ENCODE measurements at regions of chr14 and their contacts with region 1.

Region 1: GRCh38 chr14:61475316-61475715 is 153.9 kb downstream of the PRKCH start:
- DNase-seq: no peak
- H3K4me3 Mint-ChIP-seq: peak overlapping the region; percentile 38
- H3K27ac Mint-ChIP-seq: peak overlapping the region; percentile 100
- H3K4me1 Mint-ChIP-seq: peaks cover 88% of the 10 kb centered on the region
- H3K27me3 Mint-ChIP-seq: no peaks in the 10 kb centered on the region

Region 2: GRCh38 chr14:61178226-61179060 is 296.9 kb before region 1 on chr14:
- CTCF ChIA-PET with region 1: no interaction called
- intact Hi-C with region 1: loop called (anchors 2 kb)
- DNase-seq: peak; percentile 78
- H3K4me3 Mint-ChIP-seq: peak overlapping the region; percentile 41
- H3K27ac Mint-ChIP-seq: peak overlapping the region; percentile 94
- H3K4me1 Mint-ChIP-seq: peaks cover 57% of the 10 kb centered on the region
- H3K27me3 Mint-ChIP-seq: peaks cover 6% of the 10 kb centered on the region

Region 3: DNA sequence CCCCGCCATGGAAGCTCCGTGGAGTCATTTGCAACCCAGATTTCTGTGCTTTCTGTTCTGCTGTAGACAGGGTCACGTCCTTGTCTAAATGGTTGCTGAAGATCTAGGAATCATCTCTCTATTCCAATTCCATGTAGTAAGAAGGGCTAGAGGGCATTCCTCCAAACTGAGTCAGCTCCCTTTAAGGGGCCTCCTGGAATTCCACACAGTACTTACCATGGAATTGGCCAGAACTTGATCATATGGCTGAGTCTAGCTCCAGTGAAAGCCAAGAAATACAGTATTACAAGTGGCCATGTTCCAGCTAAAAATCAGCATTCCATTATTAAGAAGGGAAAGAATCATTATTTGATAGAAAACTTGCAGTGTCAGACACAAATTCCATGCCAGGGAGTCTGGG is 17.9 kb after region 1 on chr14:
- CTCF ChIA-PET with region 1: interaction called, 12 read pairs
- intact Hi-C with region 1: loop called (anchors 1 kb)
- DNase-seq: no peak
- H3K4me3 Mint-ChIP-seq: no peak overlapping the region
- H3K27ac Mint-ChIP-seq: no peak overlapping the region
- H3K4me1 Mint-ChIP-seq: peaks cover 42% of the 10 kb centered on the region
- H3K27me3 Mint-ChIP-seq: no peaks in the 10 kb centered on the region

Region 4: DNA sequence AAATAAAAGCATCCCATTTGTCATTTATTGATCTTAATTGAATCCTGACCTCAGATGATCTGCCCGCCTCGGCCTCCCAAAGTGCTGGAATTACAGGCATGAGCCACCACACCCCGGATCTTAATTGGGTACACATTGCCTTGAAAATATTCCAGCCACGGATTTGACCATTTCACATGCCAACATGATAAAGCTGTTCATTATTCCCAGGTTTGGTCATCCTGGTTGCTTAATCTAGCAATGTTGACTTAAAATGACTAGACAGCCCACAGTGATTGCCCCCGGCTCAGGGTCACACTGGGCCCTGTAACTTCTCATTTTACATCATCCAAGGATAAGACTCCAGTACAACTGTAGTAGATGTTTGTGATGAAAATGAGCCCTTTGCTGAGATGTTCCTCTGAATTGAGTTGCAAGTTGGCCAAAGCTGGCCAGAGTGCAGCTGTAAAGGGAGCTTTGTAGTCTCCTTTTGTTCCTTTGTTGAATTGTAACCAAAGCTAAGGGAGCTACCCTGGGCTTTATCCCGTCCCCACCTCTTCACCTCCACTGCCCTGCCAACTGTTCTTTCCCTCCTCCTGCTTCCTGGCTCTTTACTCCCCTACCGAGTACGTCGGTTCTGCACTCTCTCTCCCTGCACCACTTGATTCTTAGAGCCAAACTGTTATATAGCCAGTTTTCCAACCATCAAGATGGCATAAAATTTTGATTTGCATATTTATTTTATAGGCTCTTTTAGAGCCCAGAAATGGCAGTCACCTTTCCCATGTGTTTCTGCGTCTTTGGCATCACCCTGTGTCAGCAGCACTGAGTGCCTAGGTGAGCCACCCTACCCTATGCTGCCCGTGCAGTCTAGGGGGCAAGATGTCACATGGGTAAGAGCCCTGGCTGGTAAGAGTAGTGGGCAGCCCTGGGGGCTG is 78.7 kb after region 1 on chr14:
- CTCF ChIA-PET with region 1: interaction called, 3 read pairs
- intact Hi-C with region 1: loop called (anchors 1 kb)
- DNase-seq: no peak
- H3K4me3 Mint-ChIP-seq: no peak overlapping the region
- H3K27ac Mint-ChIP-seq: peak overlapping the region; percentile 97
- H3K4me1 Mint-ChIP-seq: peaks cover 66% of the 10 kb centered on the region
- H3K27me3 Mint-ChIP-seq: no peaks in the 10 kb centered on the region

Region 5: GRCh38 chr14:61620130-61620946 is 145.0 kb after region 1 on chr14:
- CTCF ChIA-PET with region 1: interaction called, 3 read pairs
- intact Hi-C with region 1: loop called (anchors 1 kb)
- DNase-seq: peak; percentile 85
- H3K4me3 Mint-ChIP-seq: no peak overlapping the region
- H3K27ac Mint-ChIP-seq: peak overlapping the region; percentile 89
- H3K4me1 Mint-ChIP-seq: peaks cover 80% of the 10 kb centered on the region
- H3K27me3 Mint-ChIP-seq: no peaks in the 10 kb centered on the region

Region 6: GRCh38 chr14:61761959-61762786 is 286.9 kb after region 1 on chr14 and contains the start of gene SNAPC1:
- CTCF ChIA-PET with region 1: no interaction called
- intact Hi-C with region 1: loop called (anchors 2 kb)
- DNase-seq: peak; percentile 99
- H3K4me3 Mint-ChIP-seq: peak within 1 kb of the TSS; percentile 97
- H3K27ac Mint-ChIP-seq: peak within 1 kb of the TSS; percentile 96
- H3K4me1 Mint-ChIP-seq: peaks cover 40% of the 10 kb centered on the region
- H3K27me3 Mint-ChIP-seq: no peaks in the 10 kb centered on the region
- total RNA-seq, gene SNAPC1: 8.7 to 9.2 TPM

Measured in activated naive CD4-positive, alpha-beta T cell treated with anti-CD3 and anti-CD28 coated beads for 36 hours (primary cell).